Mammary epithelial cell (primary cell): ENCODE measurements at regions of chr18 and their contacts with region 1.

Region 1: DNA sequence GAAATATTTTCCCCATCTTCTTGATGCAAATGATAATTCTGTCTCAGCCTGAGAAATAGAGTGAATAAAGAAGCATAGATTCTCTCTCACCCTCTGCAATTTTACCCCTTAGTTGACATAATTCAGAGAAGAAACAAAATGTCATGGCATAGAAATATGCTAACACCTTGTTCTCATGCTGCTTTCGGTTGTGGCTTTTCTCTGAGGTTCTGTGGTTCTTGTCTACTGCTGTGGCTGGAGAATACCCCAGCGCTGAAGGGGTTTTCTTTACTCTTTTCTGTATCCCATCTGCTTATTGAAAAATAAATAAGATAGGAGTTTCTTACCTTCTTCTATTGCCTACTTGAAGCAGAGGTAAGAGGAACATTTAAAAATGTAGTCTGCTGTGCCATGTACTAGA is 15.4 kb upstream of the RAB27B start:
- DNase-seq: no peak
- H3K4me3 ChIP-seq: no peak overlapping the region
- H3K27ac ChIP-seq: no peak overlapping the region
- H3K4me1 ChIP-seq: no peaks in the 10 kb centered on the region
- H3K27me3 ChIP-seq: no peaks in the 10 kb centered on the region
- CTCF ChIP-seq: no peak

Region 2: DNA sequence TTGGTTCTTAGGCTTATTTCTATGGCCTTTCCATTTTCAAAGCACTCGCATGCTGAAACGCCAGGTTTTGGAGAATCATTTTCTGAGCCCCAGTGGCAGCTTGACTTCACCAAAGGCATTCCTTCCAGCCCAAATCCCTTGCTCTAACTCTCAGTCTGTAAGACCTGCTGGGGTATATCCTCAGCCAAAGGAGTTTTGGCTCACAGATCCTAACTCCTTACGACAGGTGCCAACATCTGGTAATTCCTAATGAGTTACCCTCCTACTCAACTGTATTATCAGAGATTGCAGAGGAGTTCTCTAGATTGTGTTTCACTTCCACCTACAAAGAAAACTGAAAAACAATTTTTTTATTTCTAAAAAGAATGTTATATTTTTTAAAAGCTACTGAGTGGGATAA is 63.6 kb before region 1 on chr18:
- CTCF ChIA-PET with region 1: no interaction called
- dilution Hi-C with region 1: loop called (anchors 5 kb)
- in situ Hi-C with region 1: no loop called
- intact Hi-C with region 1: no loop called
- DNase-seq: no peak
- H3K4me3 ChIP-seq: no peak overlapping the region
- H3K27ac ChIP-seq: no peak overlapping the region
- H3K4me1 ChIP-seq: no peaks in the 10 kb centered on the region
- H3K27me3 ChIP-seq: no peaks in the 10 kb centered on the region
- CTCF ChIP-seq: no peak

Region 3: GRCh38 chr18:54873884-54874255 is 61.0 kb after region 1 on chr18:
- CTCF ChIA-PET with region 1: no interaction called
- dilution Hi-C with region 1: no loop called
- in situ Hi-C with region 1: no loop called
- intact Hi-C with region 1: no loop called
- DNase-seq: peak; percentile 5
- H3K4me3 ChIP-seq: no peak overlapping the region
- H3K27ac ChIP-seq: no peak overlapping the region
- H3K4me1 ChIP-seq: peaks cover 5% of the 10 kb centered on the region
- H3K27me3 ChIP-seq: no peaks in the 10 kb centered on the region
- CTCF ChIP-seq: no peak